Spleen (tissue), 13 donors: ENCODE measurements at regions of chr1 and their contacts with region 1.

Region 1: GRCh38 chr1:230310381-230311163 is 115.6 kb downstream of the PGBD5 start:
- DNase-seq: peak; percentile 89
- H3K4me3 ChIP-seq: no peak overlapping the region
- H3K27ac ChIP-seq: no peak overlapping the region
- H3K4me1 ChIP-seq: peaks cover 0 to 24% (median 11%) of the 10 kb centered on the region in 6 donors
- H3K27me3 ChIP-seq: no peaks in the 10 kb centered on the region
- CTCF ChIP-seq: peak; percentile 77 to 95 (median 94)
- POLR2A ChIP-seq: no peak

Region 2: DNA sequence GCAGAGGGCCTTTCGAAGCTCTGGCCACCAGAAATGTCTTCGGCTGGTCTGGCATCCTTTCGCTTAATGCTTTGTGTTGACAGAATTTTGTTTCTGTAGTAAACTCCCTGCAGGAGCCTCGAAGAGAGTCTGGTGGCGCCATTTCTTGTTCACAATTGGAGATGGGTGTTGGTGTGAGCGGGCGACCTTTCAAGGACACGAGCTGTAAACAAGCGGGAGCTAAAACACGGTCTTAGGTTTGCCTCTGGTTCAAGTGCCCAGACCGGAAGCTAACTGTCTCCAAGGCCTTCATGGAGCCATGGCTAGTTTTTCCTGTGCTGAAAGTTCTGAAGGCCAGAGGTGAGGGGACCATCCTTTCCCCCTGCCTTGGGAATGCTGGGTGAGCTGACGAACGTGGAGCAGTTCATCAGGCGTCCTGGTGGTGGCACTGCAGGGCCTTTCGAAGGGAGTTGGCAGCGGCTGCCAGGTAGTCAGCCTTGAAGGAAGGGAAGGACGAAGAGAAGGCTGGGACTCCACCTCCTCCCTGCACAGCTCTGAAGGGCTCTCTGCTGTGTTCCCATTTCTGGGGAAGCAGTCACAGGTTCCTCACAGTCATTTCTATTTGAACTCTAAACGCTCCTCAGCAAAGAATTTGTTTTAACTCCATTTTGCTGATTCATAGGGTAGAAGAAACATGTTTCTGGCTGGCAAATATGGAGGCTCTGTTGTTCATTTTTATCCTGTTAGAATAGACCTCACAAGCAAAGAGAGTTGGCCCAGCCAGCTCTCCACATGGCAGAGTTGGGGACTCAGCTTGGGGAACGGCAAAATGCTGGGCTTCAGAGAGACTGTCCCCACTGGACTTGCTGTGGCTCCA is 649.3 kb before region 1 on chr1:
- intact Hi-C with region 1: loop called (anchors 2 kb)
- DNase-seq: peak; percentile 93
- H3K4me3 ChIP-seq: no peak overlapping the region
- H3K27ac ChIP-seq: no peak overlapping the region
- H3K4me1 ChIP-seq: peaks cover 9 to 28% (median 20%) of the 10 kb centered on the region in 6 donors
- H3K27me3 ChIP-seq: no peaks in the 10 kb centered on the region
- CTCF ChIP-seq: peak; percentile 77 to 91 (median 86)
- POLR2A ChIP-seq: no peak

Region 3: DNA sequence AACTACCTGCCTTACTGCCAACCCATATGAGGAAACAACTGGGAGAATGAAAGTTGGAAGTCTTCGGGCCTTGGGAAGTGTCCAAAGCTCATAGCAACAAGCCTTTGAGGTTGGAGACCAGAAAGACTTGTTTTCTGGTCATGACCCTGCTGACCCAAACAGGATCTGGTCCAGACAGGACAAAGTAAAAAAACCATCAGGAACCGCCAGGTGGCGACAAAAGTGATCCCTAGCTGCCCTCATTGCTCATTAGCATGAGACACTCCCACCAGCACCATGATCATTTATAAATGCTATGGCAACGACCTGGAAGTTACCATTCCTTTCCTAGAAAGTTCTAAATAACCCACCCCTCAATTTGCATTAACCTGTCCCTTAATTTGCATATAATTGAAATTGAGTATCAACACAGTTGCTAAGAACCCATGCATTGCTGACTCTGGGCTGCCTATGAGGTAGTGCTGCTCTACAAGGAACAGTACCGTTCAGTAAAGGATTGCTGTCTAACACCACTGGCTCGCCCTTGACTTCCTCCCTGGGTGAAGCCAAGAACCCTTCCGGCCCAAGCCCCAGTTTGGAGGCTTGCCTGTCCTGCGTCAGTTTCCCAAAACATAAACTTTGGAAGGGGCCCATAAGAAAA is 595.5 kb before region 1 on chr1:
- intact Hi-C with region 1: loop called (anchors 5 kb)
- DNase-seq: no peak
- H3K4me3 ChIP-seq: no peak overlapping the region
- H3K27ac ChIP-seq: no peak overlapping the region
- H3K4me1 ChIP-seq: no peaks in the 10 kb centered on the region
- H3K27me3 ChIP-seq: no peaks in the 10 kb centered on the region
- CTCF ChIP-seq: peak in 8 of 11 experiments; percentile 17 to 49 (median 36)
- POLR2A ChIP-seq: no peak

Region 4: DNA sequence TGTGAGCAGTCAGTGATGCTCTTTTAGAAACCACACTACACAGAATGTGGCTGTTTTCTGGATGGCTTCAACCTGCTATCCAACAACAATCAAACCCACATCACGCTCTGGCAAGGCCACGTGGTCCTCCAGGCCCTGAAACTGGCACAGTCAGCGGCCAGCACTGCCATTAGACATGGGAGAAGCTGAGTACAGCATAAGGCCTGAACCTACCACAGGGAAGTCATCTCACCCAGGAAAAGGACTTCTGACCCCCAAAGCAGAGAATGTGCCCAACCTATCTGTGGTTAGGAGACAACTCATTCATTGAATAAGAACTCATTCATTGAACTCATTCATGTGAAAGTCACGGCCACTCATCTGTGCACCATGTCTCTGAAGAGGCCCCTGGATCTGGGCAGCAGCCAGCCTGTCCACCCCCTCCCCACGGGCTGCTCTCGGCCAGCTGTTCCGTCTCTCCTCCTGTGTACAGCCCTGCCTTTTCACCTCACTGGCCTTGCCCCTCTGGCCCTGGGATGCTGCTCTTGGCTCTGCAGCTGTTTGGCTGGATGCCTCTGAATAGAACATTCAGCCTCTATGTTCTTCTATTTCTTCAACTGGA is 516.6 kb after region 1 on chr1:
- intact Hi-C with region 1: no loop called
- DNase-seq: no peak
- H3K4me3 ChIP-seq: no peak overlapping the region
- H3K27ac ChIP-seq: no peak overlapping the region
- H3K4me1 ChIP-seq: peaks cover 0 to 5% (median 0%) of the 10 kb centered on the region in 6 donors
- H3K27me3 ChIP-seq: peaks cover 0 to 3% (median 0%) of the 10 kb centered on the region in 7 donors
- CTCF ChIP-seq: no peak
- POLR2A ChIP-seq: no peak